OCI-LY7 (cell line): ENCODE measurements at regions of chr1 and their contacts with region 1.

Region 1: DNA sequence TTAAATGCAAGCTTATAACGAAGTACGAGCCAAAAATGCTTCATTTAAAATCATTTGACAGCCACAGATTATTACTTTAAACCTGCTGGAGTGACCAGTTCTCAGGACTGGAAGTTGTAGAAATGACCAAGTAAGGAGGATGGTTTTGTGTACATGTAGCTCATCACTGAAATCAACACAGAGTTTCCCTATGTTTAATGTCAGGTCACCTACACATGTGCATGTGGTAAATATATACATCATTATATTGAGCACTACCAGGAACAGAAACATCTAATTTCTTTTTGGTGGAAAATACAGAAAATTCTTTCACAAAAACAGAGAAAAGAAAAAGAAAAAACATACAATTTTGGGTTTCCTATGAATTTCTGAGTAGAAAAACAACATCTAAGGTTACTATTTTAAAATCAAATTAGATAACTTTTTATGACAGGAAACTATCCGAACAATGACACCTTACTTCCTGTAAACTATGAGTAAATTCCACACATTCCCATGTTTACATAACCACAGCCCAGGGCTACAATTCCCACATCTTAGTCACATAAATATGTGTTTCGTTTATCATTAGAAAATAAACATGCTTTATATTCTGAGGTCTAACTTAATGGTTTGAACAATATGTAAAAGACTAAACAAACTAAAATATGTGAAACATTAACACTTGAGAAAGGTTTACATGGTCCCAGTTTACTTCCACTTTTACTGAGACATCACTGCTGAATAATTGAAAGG is 73.6 kb downstream of the ZNF281 start:
- DNase-seq: no peak
- H3K4me3 ChIP-seq: no peak overlapping the region
- H3K27ac ChIP-seq: no peak overlapping the region
- H3K4me1 ChIP-seq: peaks cover 33% of the 10 kb centered on the region
- CTCF ChIP-seq: no peak

Region 2: GRCh38 chr1:200154069-200154767 is 182.1 kb before region 1 on chr1:
- CTCF ChIA-PET with region 1: no interaction called
- POLR2A ChIA-PET with region 1: no interaction called
- intact Hi-C with region 1: no loop called
- DNase-seq: peak; percentile 93
- H3K4me3 ChIP-seq: peak overlapping the region; percentile 41
- H3K27ac ChIP-seq: peak overlapping the region; percentile 89
- H3K4me1 ChIP-seq: peaks cover 56% of the 10 kb centered on the region
- CTCF ChIP-seq: no peak

Region 3: GRCh38 chr1:200351826-200352549 is 15.7 kb after region 1 on chr1:
- CTCF ChIA-PET with region 1: no interaction called
- POLR2A ChIA-PET with region 1: interaction called, 16 read pairs
- intact Hi-C with region 1: no loop called
- DNase-seq: peak; percentile 16
- H3K4me3 ChIP-seq: peak overlapping the region; percentile 11
- H3K27ac ChIP-seq: no peak overlapping the region
- H3K4me1 ChIP-seq: peaks cover 18% of the 10 kb centered on the region
- CTCF ChIP-seq: no peak

Region 4: DNA sequence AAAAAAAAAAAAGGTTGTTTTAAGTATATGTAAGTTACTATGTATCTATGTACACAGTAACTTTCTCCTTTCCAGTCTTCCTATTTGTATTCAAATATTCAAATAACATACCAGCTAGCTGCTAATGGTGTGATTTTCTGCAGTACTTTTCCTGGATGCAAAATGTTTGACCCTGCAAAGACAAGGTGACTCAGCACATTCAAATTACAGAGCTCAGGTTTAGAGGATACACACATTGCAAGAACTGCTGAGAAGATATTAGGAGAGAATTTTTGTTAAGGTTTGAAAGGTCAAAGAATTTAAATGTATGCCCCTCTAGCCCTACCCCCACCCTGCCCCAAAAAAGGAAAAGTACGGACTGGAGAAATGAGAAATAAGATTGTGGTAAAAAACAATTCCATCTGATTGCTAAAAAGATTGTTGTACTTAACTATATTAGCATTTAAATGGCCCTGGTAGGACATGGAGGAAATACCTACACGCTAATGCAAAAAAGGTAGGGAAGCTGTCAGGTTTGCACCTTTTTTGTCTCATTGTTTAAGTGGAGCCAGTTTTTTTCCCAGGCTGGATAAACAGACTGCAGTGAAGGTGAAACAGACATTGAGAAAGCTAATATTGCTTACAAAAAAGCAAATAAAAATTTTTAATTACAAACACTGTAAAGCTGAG is 27.9 kb after region 1 on chr1:
- CTCF ChIA-PET with region 1: interaction called, 4 read pairs
- POLR2A ChIA-PET with region 1: interaction called, 12 read pairs
- intact Hi-C with region 1: no loop called
- DNase-seq: no peak
- H3K4me3 ChIP-seq: no peak overlapping the region
- H3K27ac ChIP-seq: no peak overlapping the region
- H3K4me1 ChIP-seq: peaks cover 37% of the 10 kb centered on the region
- CTCF ChIP-seq: no peak

Region 5: DNA sequence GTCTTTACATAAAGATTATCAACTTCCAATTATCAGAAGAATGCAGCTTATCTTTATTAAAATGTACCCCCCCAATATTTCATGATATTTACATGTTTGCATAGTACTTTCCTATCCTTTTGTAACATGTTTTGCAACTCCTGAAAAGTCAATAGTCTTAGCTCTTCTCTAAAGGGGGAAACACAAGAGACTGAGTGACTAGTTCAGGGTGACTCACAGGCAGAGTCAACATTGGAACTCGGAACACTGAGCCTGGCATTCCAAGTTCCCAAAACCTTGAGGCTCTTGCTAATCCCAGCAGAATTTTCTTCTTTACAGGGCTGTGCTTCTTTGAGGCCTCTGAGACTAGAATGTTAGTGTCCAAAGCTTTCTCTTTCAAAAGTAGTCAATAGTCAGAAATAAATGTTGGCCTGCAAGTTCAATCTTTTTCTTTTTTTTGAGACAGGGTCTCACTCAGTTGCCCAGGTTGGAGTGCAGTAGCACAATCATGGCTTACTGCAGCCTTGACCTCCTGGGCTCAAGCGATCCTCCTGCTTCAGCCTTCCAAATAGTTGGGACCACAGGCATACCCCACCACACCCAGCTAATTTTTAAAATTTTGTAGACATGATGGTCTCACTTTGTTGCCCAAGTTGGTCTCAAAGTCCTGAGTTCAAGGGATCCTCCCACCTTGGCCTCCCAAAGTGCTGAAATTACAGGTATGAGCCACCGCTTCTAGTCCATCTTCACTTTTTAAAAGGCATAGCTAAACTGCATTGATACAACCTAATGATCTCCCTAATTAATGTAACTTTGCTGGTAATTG is 36.0 kb after region 1 on chr1:
- CTCF ChIA-PET with region 1: no interaction called
- POLR2A ChIA-PET with region 1: interaction called, 15 read pairs
- intact Hi-C with region 1: no loop called
- DNase-seq: no peak
- H3K4me3 ChIP-seq: peak overlapping the region; percentile 70
- H3K27ac ChIP-seq: no peak overlapping the region
- H3K4me1 ChIP-seq: peaks cover 72% of the 10 kb centered on the region
- CTCF ChIP-seq: no peak

Region 6: GRCh38 chr1:200379431-200379755 is 43.1 kb after region 1 on chr1:
- CTCF ChIA-PET with region 1: no interaction called
- POLR2A ChIA-PET with region 1: interaction called, 15 read pairs
- intact Hi-C with region 1: loop called (anchors 2 kb)
- DNase-seq: no peak
- H3K4me3 ChIP-seq: peak overlapping the region; percentile 53
- H3K27ac ChIP-seq: peak overlapping the region; percentile 83
- H3K4me1 ChIP-seq: peaks cover 76% of the 10 kb centered on the region
- CTCF ChIP-seq: no peak

Region 7: DNA sequence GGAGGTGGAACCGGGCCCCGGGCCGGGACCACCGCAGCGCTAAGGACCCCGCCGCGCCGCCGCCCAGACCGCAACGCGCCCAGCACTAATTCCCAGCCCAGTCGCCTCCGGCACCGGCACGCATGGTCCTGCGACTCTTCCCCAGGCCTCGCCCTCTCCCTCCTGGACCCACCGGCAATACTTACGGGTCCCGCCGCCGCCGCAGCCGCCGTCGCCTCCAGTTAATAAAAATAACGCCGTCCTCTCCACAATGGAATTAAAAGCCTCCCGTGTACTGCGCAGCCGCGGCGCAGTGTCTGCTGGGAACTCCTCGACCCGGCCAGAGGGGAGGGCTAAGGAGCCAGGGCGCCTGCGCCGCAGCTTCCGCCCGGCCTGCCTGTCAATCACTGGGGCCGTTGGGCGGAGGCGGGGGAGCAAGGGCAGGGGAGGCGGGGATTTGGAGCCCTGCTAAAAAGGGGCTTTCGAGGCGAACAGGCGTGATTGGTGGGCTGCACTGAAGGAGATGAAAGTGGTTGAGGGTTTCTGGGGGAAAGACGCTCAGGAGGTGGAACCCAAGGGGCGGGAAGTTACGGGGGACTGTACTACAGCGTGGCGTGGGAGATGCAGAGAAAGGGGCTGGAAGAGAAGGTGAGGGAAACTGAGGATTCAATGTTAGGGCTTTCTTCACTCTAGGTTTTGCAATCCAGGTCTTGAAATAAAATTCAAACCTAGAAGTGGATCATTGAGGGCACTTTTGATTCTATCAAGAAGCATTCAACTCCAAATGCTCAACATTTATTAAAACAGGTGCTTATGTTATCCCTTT is 73.7 kb after region 1 on chr1 and contains the start of gene ZNF281:
- CTCF ChIA-PET with region 1: no interaction called
- POLR2A ChIA-PET with region 1: interaction called, 11 read pairs
- intact Hi-C with region 1: loop called (anchors 5 kb)
- DNase-seq: peak; percentile 96
- H3K4me3 ChIP-seq: peak within 1 kb of the TSS; percentile 97
- H3K27ac ChIP-seq: peak within 1 kb of the TSS; percentile 79
- H3K4me1 ChIP-seq: peaks cover 50% of the 10 kb centered on the region
- CTCF ChIP-seq: no peak
- total RNA-seq, gene ZNF281: 22.9 and 24.2 TPM in 2 replicates